Naive thymus-derived CD4-positive, alpha-beta T cell (primary cell): ENCODE measurements at regions of chr19 and their contacts with region 1.

Region 1: GRCh38 chr19:1905071-1905862 is at the starts of genes ADAT3 and SCAMP4:
- DNase-seq: peak; percentile 90 to 98 (median 97)
- ATAC-seq: peak; percentile 98
- H3K4me3 ChIP-seq: peak within 1 kb of the TSS; percentile 70
- H3K4me3 Mint-ChIP-seq: peak within 1 kb of the TSS; percentile 88 to 96 (median 92)
- H3K27ac ChIP-seq: peak within 1 kb of the TSS; percentile 75
- H3K27ac Mint-ChIP-seq: peak within 1 kb of the TSS; percentile 67 to 96 (median 92)
- H3K4me1 ChIP-seq: peaks cover 10% of the 10 kb centered on the region in 2 donors
- H3K4me1 Mint-ChIP-seq: peaks cover 13 to 57% (median 39%) of the 10 kb centered on the region in 7 donors
- H3K27me3 ChIP-seq: no peaks in the 10 kb centered on the region
- H3K27me3 Mint-ChIP-seq: no peaks in the 10 kb centered on the region
- total RNA-seq, gene ADAT3: 3.5 to 13.5 (median 6.1) TPM
- total RNA-seq, gene SCAMP4: 17.6 to 35.5 (median 23.0) TPM

Region 2: GRCh38 chr19:1848399-1849131 is 56.7 kb before region 1 on chr19 and contains the start of gene REXO1:
- CTCF ChIA-PET with region 1: interaction called, 3 read pairs
- POLR2A ChIA-PET with region 1: no interaction called
- intact Hi-C with region 1: loop called in 1 of 2 experiments (anchors 1 kb)
- DNase-seq: peak; percentile 96 to 100 (median 98)
- ATAC-seq: peak; percentile 90
- H3K4me3 ChIP-seq: peak within 1 kb of the TSS; percentile 85
- H3K4me3 Mint-ChIP-seq: peak within 1 kb of the TSS; percentile 83 to 95 (median 91)
- H3K27ac ChIP-seq: peak within 1 kb of the TSS; percentile 99
- H3K27ac Mint-ChIP-seq: peak within 1 kb of the TSS; percentile 85 to 95 (median 93)
- H3K4me1 ChIP-seq: peaks cover 30 to 67% of the 10 kb centered on the region in 2 donors
- H3K4me1 Mint-ChIP-seq: peaks cover 36 to 72% (median 52%) of the 10 kb centered on the region in 7 donors
- H3K27me3 ChIP-seq: no peaks in the 10 kb centered on the region
- H3K27me3 Mint-ChIP-seq: no peaks in the 10 kb centered on the region
- total RNA-seq, gene REXO1: 52.7 to 92.6 (median 73.1) TPM

Region 3: GRCh38 chr19:1855040-1855827 is 50.0 kb before region 1 on chr19:
- CTCF ChIA-PET with region 1: interaction called, 4 read pairs
- POLR2A ChIA-PET with region 1: interaction called, 3 read pairs
- intact Hi-C with region 1: loop called in 1 of 2 experiments (anchors 1 kb)
- DNase-seq: peak; percentile 58 to 89 (median 73)
- ATAC-seq: peak; percentile 78
- H3K4me3 ChIP-seq: peak overlapping the region; percentile 84
- H3K4me3 Mint-ChIP-seq: peak overlapping the region; percentile 79 to 91 (median 87)
- H3K27ac ChIP-seq: peak overlapping the region; percentile 93
- H3K27ac Mint-ChIP-seq: peak overlapping the region; percentile 82 to 96 (median 91)
- H3K4me1 ChIP-seq: peaks cover 28 to 76% of the 10 kb centered on the region in 2 donors
- H3K4me1 Mint-ChIP-seq: peaks cover 11 to 66% (median 51%) of the 10 kb centered on the region in 7 donors
- H3K27me3 ChIP-seq: no peaks in the 10 kb centered on the region
- H3K27me3 Mint-ChIP-seq: no peaks in the 10 kb centered on the region

Region 4: GRCh38 chr19:1875646-1876495 is 29.4 kb before region 1 on chr19:
- CTCF ChIA-PET with region 1: interaction called, 3 read pairs
- POLR2A ChIA-PET with region 1: interaction called, 11 read pairs
- intact Hi-C with region 1: loop called (anchors 1 kb)
- DNase-seq: peak; percentile 75 to 92 (median 85)
- ATAC-seq: peak; percentile 95
- H3K4me3 ChIP-seq: peak overlapping the region; percentile 83
- H3K4me3 Mint-ChIP-seq: peak overlapping the region; percentile 95 to 100 (median 98)
- H3K27ac ChIP-seq: peak overlapping the region; percentile 98
- H3K27ac Mint-ChIP-seq: peak overlapping the region; percentile 93 to 99 (median 98)
- H3K4me1 ChIP-seq: peaks cover 27 to 31% of the 10 kb centered on the region in 2 donors
- H3K4me1 Mint-ChIP-seq: peaks cover 9 to 41% (median 21%) of the 10 kb centered on the region in 7 donors
- H3K27me3 ChIP-seq: no peaks in the 10 kb centered on the region
- H3K27me3 Mint-ChIP-seq: peaks cover 0 to 2% (median 0%) of the 10 kb centered on the region in 5 donors

Region 5: GRCh38 chr19:1923319-1923718 is 18.1 kb after region 1 on chr19:
- CTCF ChIA-PET with region 1: no interaction called
- POLR2A ChIA-PET with region 1: interaction called, 8 read pairs
- intact Hi-C with region 1: loop called in 1 of 2 experiments (anchors 1 kb)
- DNase-seq: peak in 3 of 9 donors; percentile 26 to 44 (median 33)
- ATAC-seq: peak; percentile 54
- H3K4me3 ChIP-seq: no peak overlapping the region
- H3K4me3 Mint-ChIP-seq: no peak overlapping the region
- H3K27ac ChIP-seq: no peak overlapping the region
- H3K27ac Mint-ChIP-seq: peak overlapping the region in 2 of 9 donors; percentile 56 to 82
- H3K4me1 ChIP-seq: no peaks in the 10 kb centered on the region
- H3K4me1 Mint-ChIP-seq: peaks cover 0 to 20% (median 8%) of the 10 kb centered on the region in 7 donors
- H3K27me3 ChIP-seq: no peaks in the 10 kb centered on the region
- H3K27me3 Mint-ChIP-seq: no peaks in the 10 kb centered on the region